ENCODE measurements at regions of chr15 and their contacts with region 1.

Region 1: DNA sequence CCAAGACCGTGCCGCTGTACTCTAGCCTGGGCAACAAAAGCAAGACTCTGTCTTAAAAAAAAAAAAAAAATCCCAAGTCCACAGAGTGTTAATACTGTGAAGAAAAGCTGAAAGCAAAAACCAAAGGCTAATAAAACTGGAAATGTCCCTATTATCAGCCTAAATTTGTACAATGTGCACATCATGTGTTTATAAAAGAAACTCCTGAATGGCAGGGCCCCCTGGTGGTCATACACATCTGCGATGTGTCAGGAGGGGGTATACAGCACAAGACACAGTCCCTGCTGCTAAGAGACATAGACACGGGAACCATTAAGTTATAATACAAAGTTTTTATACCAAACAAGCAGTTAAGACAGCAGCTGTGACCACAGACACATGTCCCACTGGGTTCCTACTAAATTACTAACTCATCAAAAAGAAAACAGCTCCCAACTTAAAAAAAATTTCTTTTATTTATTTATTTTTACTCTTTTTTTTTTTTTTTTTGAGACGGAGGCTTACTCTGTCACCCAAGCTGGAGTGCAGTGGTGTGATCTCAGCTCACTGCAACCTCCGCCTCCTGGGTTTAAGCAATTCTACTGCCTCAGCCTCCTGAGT is 31.0 kb downstream of the IDH2 start:
- DNase-seq: peak; percentile 93
- H3K4me3 Mint-ChIP-seq: no peak overlapping the region
- H3K27ac Mint-ChIP-seq: no peak overlapping the region
- H3K4me1 Mint-ChIP-seq: peaks cover 13% of the 10 kb centered on the region
- H3K27me3 Mint-ChIP-seq: no peaks in the 10 kb centered on the region

Region 2: GRCh38 chr15:89614164-89614563 is 457.1 kb before region 1 on chr15:
- intact Hi-C with region 1: no loop called
- DNase-seq: peak; percentile 21
- H3K4me3 Mint-ChIP-seq: no peak overlapping the region
- H3K27ac Mint-ChIP-seq: no peak overlapping the region
- H3K4me1 Mint-ChIP-seq: peaks cover 2% of the 10 kb centered on the region
- H3K27me3 Mint-ChIP-seq: no peaks in the 10 kb centered on the region

Region 3: DNA sequence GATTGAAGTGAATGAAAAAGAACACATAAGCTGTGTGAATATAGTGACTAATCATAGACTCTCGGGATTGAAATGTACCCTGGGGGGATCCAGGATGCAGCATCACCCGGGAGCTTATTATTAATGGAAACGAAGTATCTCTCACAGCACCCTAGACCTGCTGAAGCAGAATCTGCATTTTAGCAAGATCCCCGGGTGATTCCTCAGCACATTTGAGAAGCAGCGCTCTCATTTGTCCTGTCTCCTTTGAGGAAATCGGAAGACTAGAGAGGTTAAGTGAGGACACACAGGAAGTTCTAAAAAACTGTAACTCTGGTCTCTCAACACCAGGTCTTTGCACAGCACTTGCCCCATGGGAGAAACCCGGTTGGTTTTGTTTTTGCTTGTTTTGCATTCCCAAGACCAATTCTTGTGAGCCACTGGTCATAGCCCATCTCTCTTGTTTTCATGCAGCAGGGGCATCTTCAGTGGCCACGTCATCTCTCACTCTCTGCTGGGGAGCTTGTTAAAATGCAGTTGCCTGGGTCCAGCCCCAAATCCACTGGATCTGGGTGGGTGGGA is 40.0 kb before region 1 on chr15:
- intact Hi-C with region 1: loop called (anchors 5 kb)
- DNase-seq: peak; percentile 70
- H3K4me3 Mint-ChIP-seq: peak overlapping the region; percentile 57
- H3K27ac Mint-ChIP-seq: peak overlapping the region; percentile 81
- H3K4me1 Mint-ChIP-seq: peaks cover 46% of the 10 kb centered on the region
- H3K27me3 Mint-ChIP-seq: no peaks in the 10 kb centered on the region

Region 4: DNA sequence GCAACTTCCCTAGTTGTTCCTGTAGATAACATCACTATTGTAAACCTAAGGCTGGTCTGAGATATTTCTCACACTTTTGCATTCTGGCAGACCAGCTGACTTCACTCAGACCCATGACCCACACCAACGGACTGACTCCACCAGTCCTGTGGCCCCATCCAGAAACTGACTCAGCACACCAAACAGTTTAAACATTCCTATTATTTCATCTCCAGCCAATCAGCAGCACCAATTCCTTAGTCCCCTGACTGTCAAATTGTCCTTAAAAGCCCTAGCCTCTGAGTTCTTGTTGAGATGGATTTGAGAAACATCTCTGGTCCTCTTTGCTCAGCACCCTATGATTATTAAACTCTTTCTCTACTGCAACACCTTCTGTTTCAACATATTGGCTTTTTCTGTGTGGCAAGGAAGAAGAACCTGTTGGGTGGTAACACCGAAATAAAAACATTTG is 43.2 kb after region 1 on chr15:
- intact Hi-C with region 1: no loop called
- DNase-seq: no peak
- H3K4me3 Mint-ChIP-seq: no peak overlapping the region
- H3K27ac Mint-ChIP-seq: no peak overlapping the region
- H3K4me1 Mint-ChIP-seq: no peaks in the 10 kb centered on the region
- H3K27me3 Mint-ChIP-seq: peaks cover 5% of the 10 kb centered on the region